Activated naive CD4-positive, alpha-beta T cell treated with anti-CD3 and anti-CD28 coated beads for 36 hours (primary cell): ENCODE measurements at regions of chr5 and their contacts with region 1.

Region 1: GRCh38 chr5:122076664-122077365 is 1.2 kb downstream of the LOX start:
- DNase-seq: peak; percentile 77
- H3K4me3 Mint-ChIP-seq: peak overlapping the region; percentile 66
- H3K27ac Mint-ChIP-seq: no peak overlapping the region
- H3K4me1 Mint-ChIP-seq: peaks cover 12% of the 10 kb centered on the region
- H3K27me3 Mint-ChIP-seq: peaks cover 52% of the 10 kb centered on the region

Region 2: DNA sequence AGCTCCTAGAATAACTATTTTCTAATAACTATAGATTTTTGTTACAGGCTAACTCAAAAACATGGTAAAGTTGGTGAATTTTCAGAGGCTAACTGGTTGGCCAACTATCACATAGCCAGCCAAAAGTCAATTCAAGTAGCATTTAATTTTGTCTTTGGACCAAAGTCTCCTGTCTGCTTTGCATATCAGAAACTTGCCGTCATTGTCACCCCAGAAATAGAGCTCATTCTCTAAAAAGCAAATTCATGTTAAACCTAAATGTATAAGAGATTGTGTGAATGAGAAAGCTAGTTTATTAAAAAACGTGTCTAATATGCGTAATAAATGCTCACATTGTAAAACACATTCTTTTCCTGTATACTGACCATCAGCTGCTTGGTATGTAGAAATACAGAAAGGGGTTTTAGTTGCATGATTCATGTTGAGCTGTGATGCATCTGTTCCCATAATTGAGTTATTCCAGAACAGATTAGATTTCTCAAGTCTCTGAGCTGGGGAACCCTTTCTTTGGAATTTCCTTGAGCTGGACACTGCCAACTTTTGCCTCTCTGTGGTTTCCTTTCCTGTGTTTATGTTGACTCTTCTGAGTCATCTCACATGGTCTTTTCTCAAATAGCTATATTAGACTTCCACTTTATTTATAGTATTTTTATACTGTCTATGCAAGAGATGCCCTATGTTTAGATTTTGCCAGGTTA is 107.8 kb before region 1 on chr5:
- CTCF ChIA-PET with region 1: interaction called, 3 read pairs
- intact Hi-C with region 1: loop called (anchors 1 kb)
- DNase-seq: no peak
- H3K4me3 Mint-ChIP-seq: no peak overlapping the region
- H3K27ac Mint-ChIP-seq: no peak overlapping the region
- H3K4me1 Mint-ChIP-seq: peaks cover 37% of the 10 kb centered on the region
- H3K27me3 Mint-ChIP-seq: no peaks in the 10 kb centered on the region

Region 3: DNA sequence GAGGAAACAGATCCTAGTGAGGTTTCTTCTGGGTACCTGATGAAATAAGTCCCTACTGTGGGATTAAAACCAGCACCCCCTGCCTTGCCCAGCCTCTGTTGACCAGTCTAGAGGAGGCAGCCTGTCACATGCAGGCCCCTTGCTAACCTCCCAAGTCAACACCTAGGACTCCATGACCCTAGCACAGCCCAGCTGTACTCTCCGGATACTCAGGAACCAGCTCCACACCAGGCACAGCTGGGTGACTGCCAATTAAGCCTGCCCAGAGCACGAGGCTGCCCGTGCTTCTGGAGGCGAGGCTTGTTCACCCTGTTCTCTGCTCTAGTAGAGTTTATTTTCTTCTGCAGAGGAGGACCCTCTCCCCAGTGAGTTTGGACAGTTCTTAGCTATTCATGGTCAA is 861.1 kb after region 1 on chr5:
- CTCF ChIA-PET with region 1: no interaction called
- intact Hi-C with region 1: no loop called
- DNase-seq: no peak
- H3K4me3 Mint-ChIP-seq: no peak overlapping the region
- H3K27ac Mint-ChIP-seq: no peak overlapping the region
- H3K4me1 Mint-ChIP-seq: no peaks in the 10 kb centered on the region
- H3K27me3 Mint-ChIP-seq: no peaks in the 10 kb centered on the region